ENCODE measurements at regions of chr11 and their contacts with region 1.

Region 1: GRCh38 chr11:47523468-47524225 is 29.3 kb downstream of the CELF1 start:
- DNase-seq: peak; percentile 31 to 44
- H3K4me3 ChIP-seq: no peak overlapping the region
- H3K27ac ChIP-seq: peak overlapping the region; percentile 59
- H3K4me1 ChIP-seq: peaks cover 30% of the 10 kb centered on the region
- H3K27me3 ChIP-seq: no peaks in the 10 kb centered on the region
- CTCF ChIP-seq: no peak

Region 2: GRCh38 chr11:47509077-47509536 is 14.5 kb before region 1 on chr11:
- CTCF ChIA-PET with region 1: no interaction called
- POLR2A ChIA-PET with region 1: interaction called, 13 read pairs
- intact Hi-C with region 1: no loop called
- DNase-seq: peak in 1 of 2 experiments; percentile 68
- H3K4me3 ChIP-seq: no peak overlapping the region
- H3K27ac ChIP-seq: peak overlapping the region; percentile 80
- H3K4me1 ChIP-seq: peaks cover 49% of the 10 kb centered on the region
- H3K27me3 ChIP-seq: no peaks in the 10 kb centered on the region
- CTCF ChIP-seq: no peak

Measured in PC-9 (cell line).